ENCODE measurements at regions of chr14 and their contacts with region 1.

Region 1: GRCh38 chr14:36941783-36942521 is 230.5 kb downstream of the SLC25A21 start:
- DNase-seq: peak; percentile 82
- H3K4me3 ChIP-seq: no peak overlapping the region
- H3K27ac ChIP-seq: no peak overlapping the region
- H3K4me1 ChIP-seq: no peaks in the 10 kb centered on the region
- H3K27me3 ChIP-seq: no peaks in the 10 kb centered on the region
- CTCF ChIP-seq: peak; percentile 84 to 89
- POLR2A ChIP-seq: no peak

Region 2: GRCh38 chr14:36070031-36070719 is 871.8 kb before region 1 on chr14:
- CTCF ChIA-PET with region 1: interaction called, 14 read pairs
- POLR2A ChIA-PET with region 1: no interaction called
- dilution Hi-C with region 1: no loop called
- intact Hi-C with region 1: no loop called
- DNase-seq: peak; percentile 47
- H3K4me3 ChIP-seq: no peak overlapping the region
- H3K27ac ChIP-seq: no peak overlapping the region
- H3K4me1 ChIP-seq: no peaks in the 10 kb centered on the region
- H3K27me3 ChIP-seq: peaks cover 0 to 2% of the 10 kb centered on the region in 2 experiments
- CTCF ChIP-seq: peak; percentile 69 to 79
- POLR2A ChIP-seq: no peak

Region 3: GRCh38 chr14:36626151-36626550 is 315.8 kb before region 1 on chr14:
- CTCF ChIA-PET with region 1: no interaction called
- POLR2A ChIA-PET with region 1: no interaction called
- dilution Hi-C with region 1: no loop called
- intact Hi-C with region 1: no loop called
- DNase-seq: no peak
- H3K4me3 ChIP-seq: no peak overlapping the region
- H3K27ac ChIP-seq: no peak overlapping the region
- H3K4me1 ChIP-seq: no peaks in the 10 kb centered on the region
- H3K27me3 ChIP-seq: peaks cover 4 to 5% of the 10 kb centered on the region in 2 experiments
- CTCF ChIP-seq: no peak
- POLR2A ChIP-seq: no peak

Region 4: DNA sequence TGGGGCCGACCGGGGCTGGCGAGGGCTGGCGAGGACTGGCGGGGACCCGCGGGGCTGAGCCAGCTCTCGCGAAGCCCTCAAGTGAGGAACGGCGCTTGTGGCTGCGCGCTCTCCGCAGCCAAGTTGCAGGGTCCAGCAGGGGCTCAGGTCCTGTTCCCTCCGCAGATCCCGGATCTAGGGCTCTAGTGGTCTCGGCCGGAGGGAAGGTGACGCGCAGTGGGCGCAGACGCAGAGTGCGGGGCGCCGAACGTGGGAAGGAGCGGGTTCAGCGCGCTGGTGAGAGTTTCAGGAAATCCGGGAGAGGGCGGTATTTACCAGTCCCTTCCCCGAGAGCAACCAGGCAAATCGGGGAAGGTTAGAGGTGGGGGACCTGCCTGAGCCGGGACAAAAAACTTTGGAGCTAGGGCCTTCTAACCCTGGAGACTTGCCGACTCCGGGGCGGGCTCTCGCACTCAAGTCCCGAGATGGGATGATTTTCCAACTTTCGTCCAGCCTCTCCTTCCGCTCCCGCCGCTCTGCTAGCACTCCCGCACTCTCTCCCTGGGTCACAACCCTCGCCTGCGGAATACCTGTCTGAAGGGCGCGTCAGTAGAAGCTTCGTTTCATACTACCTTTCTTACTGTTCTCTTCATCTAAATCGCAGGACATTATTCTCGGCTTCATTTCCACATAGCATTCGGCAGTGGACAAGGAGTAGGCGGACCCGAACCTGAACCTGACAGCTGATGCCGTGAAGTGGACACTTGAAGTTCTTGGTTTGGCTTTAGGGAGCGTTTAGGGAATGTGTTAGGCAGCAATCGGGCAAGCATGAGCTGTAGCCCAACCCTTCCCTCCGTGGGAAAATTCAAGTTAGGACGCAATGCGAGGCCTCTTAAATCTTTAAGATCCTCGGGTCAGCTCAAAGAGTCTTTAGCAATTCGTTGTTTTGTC is 293.9 kb before region 1 on chr14:
- CTCF ChIA-PET with region 1: interaction called, 7 read pairs
- POLR2A ChIA-PET with region 1: no interaction called
- dilution Hi-C with region 1: no loop called
- intact Hi-C with region 1: loop called (anchors 1 kb)
- DNase-seq: peak; percentile 40
- H3K4me3 ChIP-seq: peak overlapping the region in 2 of 3 experiments; percentile 31 to 35
- H3K27ac ChIP-seq: no peak overlapping the region
- H3K4me1 ChIP-seq: peaks cover 10% of the 10 kb centered on the region
- H3K27me3 ChIP-seq: peaks cover 59 to 91% of the 10 kb centered on the region in 2 experiments
- CTCF ChIP-seq: peak; percentile 42 to 47
- POLR2A ChIP-seq: no peak

Region 5: GRCh38 chr14:36700656-36701055 is 241.3 kb before region 1 on chr14:
- CTCF ChIA-PET with region 1: no interaction called
- POLR2A ChIA-PET with region 1: no interaction called
- dilution Hi-C with region 1: no loop called
- intact Hi-C with region 1: no loop called
- DNase-seq: no peak
- H3K4me3 ChIP-seq: no peak overlapping the region
- H3K27ac ChIP-seq: no peak overlapping the region
- H3K4me1 ChIP-seq: no peaks in the 10 kb centered on the region
- H3K27me3 ChIP-seq: no peaks in the 10 kb centered on the region
- CTCF ChIP-seq: no peak
- POLR2A ChIP-seq: no peak

Region 6: DNA sequence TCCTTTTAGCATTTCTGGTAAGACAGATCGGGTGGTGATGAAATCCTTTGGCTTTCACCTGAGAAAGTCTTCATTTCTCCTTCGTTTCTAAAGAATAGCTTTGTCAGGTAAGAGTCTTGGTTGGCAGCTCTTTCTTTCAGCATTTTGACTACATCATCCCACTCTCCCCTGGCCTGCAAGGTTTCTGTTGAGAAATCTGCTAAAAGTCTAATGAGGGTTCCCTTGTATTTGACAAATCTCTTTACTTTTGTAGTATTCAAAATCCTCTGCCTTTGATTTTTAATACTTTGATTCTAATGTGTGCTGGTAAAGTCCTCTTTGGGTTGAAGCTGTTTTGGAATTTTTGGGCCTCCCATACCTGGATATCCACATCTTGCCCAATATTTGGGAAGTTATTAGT is 160.1 kb before region 1 on chr14:
- CTCF ChIA-PET with region 1: no interaction called
- POLR2A ChIA-PET with region 1: no interaction called
- dilution Hi-C with region 1: no loop called
- intact Hi-C with region 1: no loop called
- DNase-seq: no peak
- H3K4me3 ChIP-seq: no peak overlapping the region
- H3K27ac ChIP-seq: no peak overlapping the region
- H3K4me1 ChIP-seq: no peaks in the 10 kb centered on the region
- H3K27me3 ChIP-seq: no peaks in the 10 kb centered on the region
- CTCF ChIP-seq: no peak
- POLR2A ChIP-seq: no peak

Region 7: GRCh38 chr14:36829547-36829946 is 112.4 kb before region 1 on chr14:
- CTCF ChIA-PET with region 1: no interaction called
- POLR2A ChIA-PET with region 1: no interaction called
- dilution Hi-C with region 1: no loop called
- intact Hi-C with region 1: no loop called
- DNase-seq: no peak
- H3K4me3 ChIP-seq: no peak overlapping the region
- H3K27ac ChIP-seq: no peak overlapping the region
- H3K4me1 ChIP-seq: no peaks in the 10 kb centered on the region
- H3K27me3 ChIP-seq: peaks cover 0 to 4% of the 10 kb centered on the region in 2 experiments
- CTCF ChIP-seq: no peak
- POLR2A ChIP-seq: no peak

Region 8: DNA sequence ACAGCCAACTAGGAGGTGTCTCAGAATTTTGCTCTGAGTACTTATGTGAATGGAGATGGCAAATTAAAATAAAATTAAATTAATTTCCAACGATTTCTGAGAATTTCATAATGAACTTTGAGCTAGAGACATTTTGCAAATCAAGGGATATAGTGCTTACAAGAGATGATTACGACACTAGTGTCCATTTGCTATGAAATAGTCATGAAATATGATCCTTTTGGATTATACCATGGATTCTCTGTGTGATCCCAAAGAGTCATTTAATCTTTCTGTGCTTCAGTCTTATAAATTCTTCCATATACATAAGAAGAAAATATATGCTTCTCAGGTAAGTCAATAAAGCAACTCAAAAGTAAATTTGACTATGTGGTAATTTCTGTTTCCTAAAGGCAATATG is 10.2 kb before region 1 on chr14:
- CTCF ChIA-PET with region 1: interaction called, 24 read pairs
- POLR2A ChIA-PET with region 1: no interaction called
- dilution Hi-C with region 1: no loop called
- intact Hi-C with region 1: no loop called
- DNase-seq: no peak
- H3K4me3 ChIP-seq: no peak overlapping the region
- H3K27ac ChIP-seq: no peak overlapping the region
- H3K4me1 ChIP-seq: no peaks in the 10 kb centered on the region
- H3K27me3 ChIP-seq: no peaks in the 10 kb centered on the region
- CTCF ChIP-seq: no peak
- POLR2A ChIP-seq: no peak

Region 9: DNA sequence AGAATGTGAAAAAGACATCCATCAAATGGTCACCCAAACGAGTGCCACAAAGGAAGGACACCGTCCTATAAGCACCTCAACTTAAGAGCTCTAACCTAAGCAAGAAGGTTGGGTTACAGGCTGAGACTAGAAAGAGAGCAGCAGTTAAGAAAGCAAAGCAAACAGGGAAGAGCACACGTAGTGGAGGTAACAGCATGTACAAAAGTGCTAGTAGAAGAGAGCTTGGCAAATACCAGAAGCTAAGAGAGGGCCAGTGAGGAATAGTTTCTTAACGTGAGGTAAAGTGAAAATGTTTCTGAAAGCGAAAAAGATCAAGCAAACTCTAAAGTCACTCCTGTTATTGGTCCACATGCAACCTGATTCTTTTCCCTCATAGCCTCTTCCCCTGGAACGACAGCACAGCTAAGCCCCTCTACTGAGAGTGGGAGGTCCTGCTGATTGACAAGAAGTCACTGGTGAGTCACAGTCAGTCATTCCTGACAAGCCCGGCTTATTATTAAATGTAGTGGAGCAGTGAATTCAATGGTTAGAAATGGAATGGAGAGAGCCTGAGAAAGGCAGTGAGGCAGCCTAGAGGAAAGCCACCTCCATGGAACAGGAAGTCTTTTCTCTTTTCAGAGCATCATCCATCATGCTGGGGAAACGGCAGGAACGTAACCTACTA is 26.1 kb after region 1 on chr14:
- CTCF ChIA-PET with region 1: interaction called, 12 read pairs
- POLR2A ChIA-PET with region 1: no interaction called
- dilution Hi-C with region 1: no loop called
- intact Hi-C with region 1: no loop called
- DNase-seq: no peak
- H3K4me3 ChIP-seq: no peak overlapping the region
- H3K27ac ChIP-seq: no peak overlapping the region
- H3K4me1 ChIP-seq: no peaks in the 10 kb centered on the region
- H3K27me3 ChIP-seq: no peaks in the 10 kb centered on the region
- CTCF ChIP-seq: no peak
- POLR2A ChIP-seq: no peak

Region 10: DNA sequence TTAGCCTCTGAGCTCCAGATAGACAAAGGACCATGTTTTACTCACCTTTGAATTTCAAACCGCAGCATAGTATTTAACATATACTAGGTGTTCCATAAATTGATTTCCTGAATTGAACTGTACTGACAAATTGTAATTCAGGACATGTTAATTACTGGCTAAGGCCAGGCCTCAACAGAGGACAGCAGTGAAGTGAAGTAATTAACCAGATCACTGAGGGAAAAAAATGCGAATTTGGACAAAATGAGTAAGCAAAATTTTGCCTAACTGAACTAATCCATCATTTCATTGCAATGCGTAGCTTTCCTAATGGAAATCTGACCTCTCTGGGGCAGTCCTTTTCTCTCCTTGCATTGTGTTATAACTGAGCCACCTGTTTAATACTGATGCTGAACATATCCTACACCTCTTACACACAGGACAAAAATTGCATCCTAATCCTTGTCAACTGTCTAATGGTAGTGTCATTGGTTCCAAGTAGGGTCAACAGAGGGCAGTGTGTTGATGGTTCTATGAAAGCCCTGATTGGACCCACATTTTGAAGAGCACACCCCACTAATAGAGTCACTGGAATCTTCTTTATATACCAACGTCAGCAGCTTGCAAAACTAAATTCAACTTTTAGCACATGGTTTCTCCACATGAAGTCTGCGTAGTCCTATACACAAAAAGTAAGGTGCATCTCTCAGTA is 82.1 kb after region 1 on chr14:
- CTCF ChIA-PET with region 1: interaction called, 10 read pairs
- POLR2A ChIA-PET with region 1: no interaction called
- dilution Hi-C with region 1: no loop called
- intact Hi-C with region 1: no loop called
- DNase-seq: no peak
- H3K4me3 ChIP-seq: no peak overlapping the region
- H3K27ac ChIP-seq: no peak overlapping the region
- H3K4me1 ChIP-seq: no peaks in the 10 kb centered on the region
- H3K27me3 ChIP-seq: no peaks in the 10 kb centered on the region
- CTCF ChIP-seq: no peak
- POLR2A ChIP-seq: no peak

Region 11: DNA sequence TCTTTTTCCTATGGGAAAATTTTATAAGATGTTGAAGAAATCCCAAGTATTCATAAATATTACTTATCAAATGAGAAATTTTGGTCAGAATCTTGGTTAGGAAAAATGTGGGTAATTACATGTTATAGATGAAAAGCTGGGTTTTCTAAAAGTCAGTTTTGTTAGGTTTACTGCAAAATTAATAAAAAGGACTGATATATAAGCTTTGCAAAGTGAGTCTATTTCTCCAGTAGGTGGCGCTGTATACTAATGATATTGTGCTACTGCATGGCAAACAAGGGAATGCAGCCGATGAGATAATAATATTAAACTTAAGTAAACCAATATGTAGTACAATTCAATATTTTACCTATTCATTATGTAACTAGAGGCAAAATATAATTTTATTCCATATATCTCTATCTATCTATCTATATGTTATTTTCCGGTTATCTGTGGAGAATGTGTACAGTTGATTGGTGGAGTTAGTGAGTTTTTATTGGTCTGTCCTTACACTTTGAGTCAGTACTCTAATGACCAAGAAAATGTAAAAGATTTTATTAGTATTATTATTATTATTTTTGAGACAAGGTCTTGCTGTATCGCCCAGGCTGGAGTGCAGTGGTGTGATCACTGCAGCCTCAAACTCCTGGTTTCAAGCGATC is 288.7 kb after region 1 on chr14:
- CTCF ChIA-PET with region 1: interaction called, 11 read pairs
- POLR2A ChIA-PET with region 1: no interaction called
- dilution Hi-C with region 1: no loop called
- intact Hi-C with region 1: loop called (anchors 1 kb)
- DNase-seq: peak; percentile 66
- H3K4me3 ChIP-seq: no peak overlapping the region
- H3K27ac ChIP-seq: no peak overlapping the region
- H3K4me1 ChIP-seq: no peaks in the 10 kb centered on the region
- H3K27me3 ChIP-seq: no peaks in the 10 kb centered on the region
- CTCF ChIP-seq: peak; percentile 40 to 54
- POLR2A ChIP-seq: no peak